ENCODE measurements at regions of chr15 and their contacts with region 1.

Region 1: GRCh38 chr15:56052395-56053045 is 59.1 kb upstream of the NEDD4 start:
- DNase-seq: peak; percentile 29
- ATAC-seq: peak; percentile 65
- H3K4me3 Mint-ChIP-seq: no peak overlapping the region
- H3K27ac Mint-ChIP-seq: no peak overlapping the region
- H3K4me1 Mint-ChIP-seq: no peaks in the 10 kb centered on the region
- H3K27me3 Mint-ChIP-seq: peaks cover 9% of the 10 kb centered on the region

Region 2: DNA sequence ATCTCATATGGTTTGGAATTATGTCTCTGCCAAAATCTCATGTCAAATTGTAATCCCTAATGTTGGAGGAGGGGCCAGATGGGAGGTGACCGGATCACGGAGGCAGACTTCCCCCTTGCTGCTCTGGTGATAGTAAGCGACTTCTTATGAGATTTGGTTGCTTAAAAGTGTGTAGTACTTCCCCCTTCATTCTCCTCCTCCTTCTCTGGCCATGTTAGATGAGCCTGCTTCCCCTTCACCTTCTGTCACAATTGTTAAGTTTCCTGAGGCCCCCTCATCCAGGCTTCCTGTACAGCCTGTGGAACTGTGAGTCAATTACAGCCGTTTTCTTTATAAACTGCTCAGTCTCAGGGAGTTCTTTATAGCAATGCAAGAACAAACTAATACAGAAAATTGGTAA is 110.2 kb before region 1 on chr15:
- CTCF ChIA-PET with region 1: no interaction called
- POLR2A ChIA-PET with region 1: no interaction called
- DNase-seq: no peak
- ATAC-seq: no peak
- H3K4me3 Mint-ChIP-seq: no peak overlapping the region
- H3K27ac Mint-ChIP-seq: no peak overlapping the region
- H3K4me1 Mint-ChIP-seq: no peaks in the 10 kb centered on the region
- H3K27me3 Mint-ChIP-seq: no peaks in the 10 kb centered on the region

Region 3: GRCh38 chr15:55993111-55993803 is 59.3 kb before region 1 on chr15 and contains the start of gene NEDD4:
- CTCF ChIA-PET with region 1: interaction called, 14 read pairs
- POLR2A ChIA-PET with region 1: no interaction called
- DNase-seq: peak; percentile 79
- ATAC-seq: peak; percentile 94
- H3K4me3 Mint-ChIP-seq: peak within 1 kb of the TSS; percentile 78
- H3K27ac Mint-ChIP-seq: peak within 1 kb of the TSS; percentile 53
- H3K4me1 Mint-ChIP-seq: peaks cover 9% of the 10 kb centered on the region
- H3K27me3 Mint-ChIP-seq: peaks cover 32% of the 10 kb centered on the region
- total RNA-seq, gene NEDD4: 5.7 to 6.2 TPM

Measured in activated CD8-positive, alpha-beta T cell treated with anti-CD3 and anti-CD28 coated beads, Interleukin-2, amount 10 ng/mL, durations not matched to agents 7 days and 5 days (primary cell).